ENCODE measurements at regions of chr3 and their contacts with region 1.

Region 1: GRCh38 chr3:137946345-137946973 is 63.5 kb upstream of the CLDN18 start:
- DNase-seq: peak in 1 of 2 donors; percentile 20
- H3K4me3 ChIP-seq: no peak overlapping the region
- H3K27ac ChIP-seq: no peak overlapping the region
- H3K4me1 ChIP-seq: no peaks in the 10 kb centered on the region
- H3K27me3 ChIP-seq: no peaks in the 10 kb centered on the region
- CTCF ChIP-seq: peak; percentile 40 to 47

Region 2: DNA sequence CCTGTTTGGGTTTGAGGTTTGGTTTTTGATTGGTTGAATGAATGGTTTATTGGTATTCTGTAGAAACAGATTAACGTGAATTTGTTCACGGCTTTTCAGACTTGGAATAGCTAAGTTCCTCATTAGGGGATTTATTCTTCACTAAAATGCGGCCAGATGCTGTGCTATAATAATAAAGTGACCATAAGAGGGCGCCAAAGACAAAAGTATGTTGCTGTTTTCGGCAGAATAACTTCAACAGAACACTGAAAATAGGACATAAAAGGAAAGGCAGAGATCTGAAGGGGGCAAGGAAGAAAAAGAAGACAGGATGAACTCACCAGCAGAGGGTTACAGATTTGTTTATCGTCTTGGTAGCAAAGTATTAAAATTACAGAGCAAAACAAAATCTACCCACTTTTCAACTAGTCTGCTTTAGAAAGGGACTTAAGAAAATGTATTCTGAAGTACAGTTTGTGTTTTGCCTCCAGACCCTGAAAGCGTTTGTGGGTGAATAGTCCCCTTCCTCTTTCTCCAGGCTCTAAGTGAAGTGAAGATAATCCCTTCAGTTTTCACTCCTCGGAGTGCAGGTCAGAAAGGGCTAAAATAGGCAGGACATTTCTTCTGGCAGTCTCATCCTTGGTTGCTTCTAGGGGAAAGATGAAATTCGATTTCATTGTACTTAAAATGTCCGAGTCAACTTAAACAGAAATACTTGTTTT is 841.0 kb before region 1 on chr3:
- intact Hi-C with region 1: loop called (anchors 10 kb)
- DNase-seq: no peak
- H3K4me3 ChIP-seq: no peak overlapping the region
- H3K27ac ChIP-seq: no peak overlapping the region
- H3K4me1 ChIP-seq: no peaks in the 10 kb centered on the region
- H3K27me3 ChIP-seq: peaks cover 0 to 26% of the 10 kb centered on the region in 2 donors
- CTCF ChIP-seq: peak; percentile 58 to 60

Region 3: DNA sequence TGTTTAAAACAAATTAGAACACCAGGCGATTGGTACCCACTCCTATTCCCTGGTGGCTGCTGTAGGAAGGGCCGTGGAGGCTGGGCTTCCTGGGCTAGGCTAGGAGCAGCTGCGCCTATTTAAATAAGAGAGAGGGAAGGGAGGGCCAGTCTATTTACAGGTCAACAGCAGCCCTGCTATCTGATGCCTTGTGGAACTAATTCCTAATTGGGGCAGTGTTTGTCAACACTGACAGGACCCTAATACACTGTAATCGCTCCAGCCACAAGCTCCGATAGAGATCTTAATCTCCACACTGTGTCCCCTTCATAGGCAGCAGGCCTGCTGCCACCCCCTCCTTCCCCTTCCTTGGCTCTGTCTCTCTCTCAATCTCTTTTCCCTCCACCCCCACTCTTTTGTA is 299.3 kb before region 1 on chr3:
- intact Hi-C with region 1: no loop called
- DNase-seq: no peak
- H3K4me3 ChIP-seq: no peak overlapping the region
- H3K27ac ChIP-seq: no peak overlapping the region
- H3K4me1 ChIP-seq: no peaks in the 10 kb centered on the region
- H3K27me3 ChIP-seq: no peaks in the 10 kb centered on the region
- CTCF ChIP-seq: no peak